ENCODE measurements at regions of chr12 and their contacts with region 1.

Region 1: GRCh38 chr12:55829967-55830600 is 697 bp upstream of the DNAJC14 start:
- DNase-seq: peak; percentile 47
- ATAC-seq: peak; percentile 1
- H3K4me3 Mint-ChIP-seq: peak overlapping the region; percentile 97
- H3K27ac Mint-ChIP-seq: peak overlapping the region; percentile 99
- H3K4me1 Mint-ChIP-seq: peaks cover 35% of the 10 kb centered on the region
- H3K27me3 Mint-ChIP-seq: no peaks in the 10 kb centered on the region
- CTCF ChIP-seq: no peak

Region 2: DNA sequence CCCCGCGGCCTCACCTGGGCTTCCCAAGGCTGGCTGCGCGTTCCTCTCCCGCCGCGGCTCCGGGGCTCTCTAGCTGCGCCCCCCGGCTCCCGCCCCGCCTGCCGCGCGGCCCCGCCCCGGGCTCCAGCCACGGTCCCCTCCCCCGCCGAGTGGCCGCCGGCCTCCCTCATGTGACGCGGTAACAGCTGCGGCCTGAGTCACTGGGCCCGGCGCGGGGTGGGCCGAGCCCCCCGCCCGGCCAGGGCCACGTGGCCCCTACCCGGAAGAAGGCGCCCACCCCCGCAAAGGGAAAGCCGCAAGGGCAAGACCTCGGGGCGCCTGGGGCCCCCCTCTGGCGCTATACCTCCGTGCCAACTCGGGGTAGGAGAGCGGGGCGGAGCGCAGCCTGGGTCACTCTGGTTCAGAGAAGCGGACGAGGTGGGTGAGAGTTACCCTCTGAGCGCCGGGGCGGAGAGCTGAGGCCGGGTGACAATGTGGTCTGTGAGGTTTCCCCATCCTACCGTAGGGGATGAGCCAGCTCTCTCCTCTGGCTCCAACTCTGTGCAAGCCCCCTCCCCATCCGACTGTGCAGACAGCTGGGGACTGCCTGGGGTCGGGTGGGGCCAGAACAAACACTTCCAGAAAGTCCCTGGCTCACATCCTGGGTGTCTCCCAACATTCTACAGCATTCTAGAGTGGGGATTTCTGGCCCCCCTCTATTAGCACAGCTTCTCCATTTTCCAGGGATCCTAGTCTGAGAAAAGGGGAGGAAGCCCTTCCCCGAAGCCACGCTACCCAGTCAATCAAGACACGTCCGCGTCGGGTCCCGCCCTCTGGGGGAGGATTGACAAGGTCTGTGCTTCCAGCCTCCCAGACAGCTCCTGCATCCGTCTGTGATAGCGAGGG is 100.9 kb before region 1 on chr12 and contains the start of gene CD63:
- CTCF ChIA-PET with region 1: interaction called, 13 read pairs
- POLR2A ChIA-PET with region 1: interaction called, 5 read pairs
- DNase-seq: peak; percentile 87
- ATAC-seq: peak; percentile 75
- H3K4me3 Mint-ChIP-seq: peak within 1 kb of the TSS; percentile 88
- H3K27ac Mint-ChIP-seq: peak within 1 kb of the TSS; percentile 75
- H3K4me1 Mint-ChIP-seq: peaks cover 31% of the 10 kb centered on the region
- H3K27me3 Mint-ChIP-seq: no peaks in the 10 kb centered on the region
- CTCF ChIP-seq: no peak
- total RNA-seq, gene CD63: 409 to 419 TPM (median 414 TPM) in 3 replicates

Region 3: DNA sequence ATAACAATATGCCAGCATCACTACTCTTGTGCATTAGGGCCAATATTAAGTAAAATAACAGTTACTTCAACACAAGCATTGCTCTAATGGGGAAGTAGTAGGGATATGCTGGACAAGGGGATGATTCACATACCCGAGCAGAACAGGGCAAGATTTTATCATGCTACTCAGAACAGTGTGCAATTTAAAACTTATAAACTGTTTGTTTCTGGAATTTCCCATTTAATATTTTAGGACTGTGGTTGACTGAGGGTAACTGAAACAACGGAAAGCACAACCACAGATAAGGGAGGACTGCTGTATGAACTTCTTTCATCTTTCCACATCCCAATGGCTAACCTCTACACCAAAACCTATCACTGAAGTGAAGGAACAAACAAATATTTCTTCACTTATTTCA is 49.4 kb before region 1 on chr12:
- CTCF ChIA-PET with region 1: no interaction called
- POLR2A ChIA-PET with region 1: no interaction called
- DNase-seq: no peak
- ATAC-seq: no peak
- H3K4me3 Mint-ChIP-seq: no peak overlapping the region
- H3K27ac Mint-ChIP-seq: no peak overlapping the region
- H3K4me1 Mint-ChIP-seq: no peaks in the 10 kb centered on the region
- H3K27me3 Mint-ChIP-seq: no peaks in the 10 kb centered on the region
- CTCF ChIP-seq: no peak

Region 4: GRCh38 chr12:55817346-55818139 is 12.5 kb before region 1 on chr12 and contains the starts of genes ORMDL2 and SARNP:
- CTCF ChIA-PET with region 1: interaction called, 18 read pairs
- POLR2A ChIA-PET with region 1: interaction called, 64 read pairs
- DNase-seq: peak; percentile 96
- ATAC-seq: peak; percentile 96
- H3K4me3 Mint-ChIP-seq: no peak within 1 kb of the TSS; the same call in none of the 2 replicates
- H3K27ac Mint-ChIP-seq: no peak within 1 kb of the TSS; the same call in 1 of the 2 replicates
- H3K4me1 Mint-ChIP-seq: peaks cover 39% of the 10 kb centered on the region
- H3K27me3 Mint-ChIP-seq: no peaks in the 10 kb centered on the region
- CTCF ChIP-seq: no peak
- total RNA-seq, gene ORMDL2: 32.9 to 37.9 TPM (median 34.8 TPM) in 3 replicates
- total RNA-seq, gene SARNP: 98.3 to 102 TPM (median 100 TPM) in 3 replicates

Region 5: DNA sequence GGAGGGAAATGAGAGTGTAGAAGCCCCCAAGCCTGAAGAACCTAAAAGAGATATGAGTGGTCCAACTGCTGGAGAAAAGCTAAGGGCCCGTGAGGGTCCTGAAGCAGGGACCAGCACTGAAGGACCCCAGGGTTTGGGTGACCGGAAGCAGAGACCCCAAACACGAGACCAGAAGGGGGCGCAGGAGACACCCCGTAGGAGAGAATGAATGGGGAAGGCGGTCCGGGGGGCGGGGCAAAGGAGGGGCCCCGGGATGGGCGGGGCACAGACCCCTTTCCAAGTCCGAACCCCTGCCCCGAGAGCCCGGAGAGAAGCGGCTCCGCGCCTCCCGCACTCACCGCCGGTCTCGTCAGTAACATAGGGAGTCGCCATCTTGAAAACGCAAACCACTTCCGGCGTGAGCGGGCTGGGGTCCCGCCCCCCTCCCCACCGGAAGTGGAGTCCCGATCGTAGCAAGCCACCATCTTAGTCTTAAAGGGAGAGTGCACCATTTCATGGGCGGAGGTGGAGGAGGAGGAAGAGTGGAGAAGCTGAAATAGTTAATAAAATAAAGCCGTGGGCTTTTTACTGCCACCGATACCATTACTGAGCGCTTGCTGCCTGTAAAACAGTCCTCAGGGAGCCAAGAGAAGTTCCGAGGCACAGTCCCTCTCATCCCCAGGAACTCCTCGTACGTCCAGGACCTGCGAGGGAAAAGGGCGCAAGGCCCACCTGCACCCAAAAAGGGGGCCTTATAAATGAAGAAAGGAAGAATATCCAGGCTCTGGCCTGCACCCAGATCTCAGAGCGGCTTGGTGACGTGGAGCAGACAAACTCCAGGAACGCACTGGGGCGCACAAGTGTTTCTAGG is 96.9 kb after region 1 on chr12:
- CTCF ChIA-PET with region 1: interaction called, 18 read pairs
- POLR2A ChIA-PET with region 1: interaction called, 16 read pairs
- DNase-seq: peak; percentile 95
- ATAC-seq: peak; percentile 56
- H3K4me3 Mint-ChIP-seq: peak overlapping the region; percentile 94
- H3K27ac Mint-ChIP-seq: peak overlapping the region; percentile 96
- H3K4me1 Mint-ChIP-seq: peaks cover 42% of the 10 kb centered on the region
- H3K27me3 Mint-ChIP-seq: peaks cover 10% of the 10 kb centered on the region
- CTCF ChIP-seq: peak; percentile 51

Region 6: GRCh38 chr12:55940065-55940732 is 110.1 kb after region 1 on chr12:
- CTCF ChIA-PET with region 1: interaction called, 22 read pairs
- POLR2A ChIA-PET with region 1: no interaction called
- DNase-seq: peak; percentile 92
- ATAC-seq: peak; percentile 94
- H3K4me3 Mint-ChIP-seq: peak overlapping the region; percentile 10; the same call in 1 of the 2 replicates
- H3K27ac Mint-ChIP-seq: no peak overlapping the region
- H3K4me1 Mint-ChIP-seq: peaks cover 9% of the 10 kb centered on the region
- H3K27me3 Mint-ChIP-seq: peaks cover 17% of the 10 kb centered on the region
- CTCF ChIP-seq: peak; percentile 74

Measured in WTC11 (cell line).